ENCODE measurements at regions of chr10 and their contacts with region 1.

Region 1: DNA sequence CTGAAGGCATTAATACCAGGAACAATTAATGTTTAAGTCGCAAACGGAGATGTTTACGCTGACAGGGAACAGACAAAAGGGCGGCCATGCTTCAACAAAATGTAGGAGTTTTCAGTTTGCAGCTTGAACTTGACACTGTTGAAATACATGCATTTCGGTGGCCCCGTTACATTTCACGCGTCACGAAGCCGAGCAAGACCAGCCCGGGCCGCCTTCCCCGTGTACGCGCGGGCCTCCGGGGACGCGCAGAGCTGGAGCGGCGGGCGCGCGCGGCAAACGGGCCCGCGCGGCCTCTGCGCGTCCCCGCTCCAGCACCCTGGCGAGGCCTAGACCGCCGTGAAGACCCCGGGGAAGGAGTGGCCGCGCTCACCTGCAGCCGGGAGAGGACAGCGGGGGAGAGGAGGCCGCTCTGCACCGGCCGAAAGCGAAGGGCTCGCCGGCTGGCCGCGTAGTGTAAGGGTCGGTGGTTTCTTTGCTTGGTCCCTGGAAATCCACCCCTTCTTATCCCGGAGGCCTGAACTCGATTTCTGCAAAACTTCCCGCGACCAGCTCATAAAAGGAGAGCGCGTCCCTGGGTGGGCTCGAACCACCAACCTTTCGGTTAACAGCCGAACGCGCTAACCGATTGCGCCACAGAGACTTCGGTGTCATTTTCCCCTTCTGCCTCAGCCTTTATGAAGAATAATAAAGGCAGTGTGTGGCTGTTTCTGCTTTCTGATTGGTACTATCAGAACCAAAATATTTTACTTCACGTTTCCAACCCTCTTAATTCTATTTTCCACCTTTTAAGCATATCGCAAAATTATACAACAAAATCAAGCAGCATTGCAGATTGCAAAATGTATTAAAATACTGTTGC is 11.4 kb upstream of the EBLN1 start:
- DNase-seq: peak; percentile 86 to 94 (median 93)
- ATAC-seq: peak; percentile 99
- H3K4me3 ChIP-seq: peak overlapping the region; percentile 90
- H3K27ac ChIP-seq: peak overlapping the region; percentile 97
- H3K4me1 ChIP-seq: peaks cover 2% of the 10 kb centered on the region
- H3K27me3 ChIP-seq: no peaks in the 10 kb centered on the region

Region 2: GRCh38 chr10:21989453-21990154 is 239.6 kb before region 1 on chr10:
- intact Hi-C with region 1: loop called in 1 of 4 experiments (anchors 10 kb)
- DNase-seq: peak; percentile 61 to 86 (median 75)
- ATAC-seq: peak; percentile 89 to 93
- H3K4me3 ChIP-seq: no peak overlapping the region
- H3K27ac ChIP-seq: no peak overlapping the region
- H3K4me1 ChIP-seq: no peaks in the 10 kb centered on the region
- H3K27me3 ChIP-seq: no peaks in the 10 kb centered on the region

Region 3: DNA sequence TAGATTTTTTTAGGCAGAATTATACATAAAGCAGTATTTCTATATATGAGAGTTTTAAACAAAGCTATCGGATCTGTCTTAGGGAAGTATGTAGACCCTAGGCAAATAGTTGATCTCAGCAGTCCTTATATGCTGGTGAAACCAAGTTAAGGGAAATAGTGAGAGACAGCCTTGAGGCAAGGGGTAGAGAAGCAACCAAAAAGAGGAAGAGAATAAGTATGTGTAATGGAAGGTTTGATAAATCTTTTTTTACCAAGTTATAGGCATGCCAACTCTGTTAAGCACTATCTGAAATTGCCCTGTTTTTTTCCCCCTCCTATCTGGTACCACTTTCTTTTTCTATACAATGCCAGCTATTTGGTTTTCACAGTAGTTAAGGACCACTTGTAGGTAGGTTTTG is 136.1 kb after region 1 on chr10:
- intact Hi-C with region 1: no loop called
- DNase-seq: no peak
- ATAC-seq: peak in 1 of 2 donors; percentile 60
- H3K4me3 ChIP-seq: no peak overlapping the region
- H3K27ac ChIP-seq: no peak overlapping the region
- H3K4me1 ChIP-seq: no peaks in the 10 kb centered on the region
- H3K27me3 ChIP-seq: no peaks in the 10 kb centered on the region

Region 4: GRCh38 chr10:22736134-22736533 is 507.0 kb after region 1 on chr10:
- intact Hi-C with region 1: no loop called
- DNase-seq: no peak
- ATAC-seq: no peak
- H3K4me3 ChIP-seq: no peak overlapping the region
- H3K27ac ChIP-seq: no peak overlapping the region
- H3K4me1 ChIP-seq: no peaks in the 10 kb centered on the region
- H3K27me3 ChIP-seq: no peaks in the 10 kb centered on the region

Measured in right cardiac atrium (tissue), 5 donors.